ENCODE measurements at regions of chr20 and their contacts with region 1.

Region 1: GRCh38 chr20:64168381-64169090 is 4.3 kb downstream of the MYT1 start:
- DNase-seq: no peak
- H3K4me3 ChIP-seq: no peak overlapping the region
- H3K27ac ChIP-seq: no peak overlapping the region
- H3K4me1 ChIP-seq: no peaks in the 10 kb centered on the region
- H3K27me3 ChIP-seq: peaks cover 97% of the 10 kb centered on the region
- CTCF ChIP-seq: no peak

Region 2: GRCh38 chr20:63156221-63156671 is 1012.3 kb before region 1 on chr20:
- CTCF ChIA-PET with region 1: interaction called, 26 read pairs
- POLR2A ChIA-PET with region 1: no interaction called
- intact Hi-C with region 1: no loop called
- DNase-seq: no peak
- H3K4me3 ChIP-seq: no peak overlapping the region
- H3K27ac ChIP-seq: no peak overlapping the region
- H3K4me1 ChIP-seq: no peaks in the 10 kb centered on the region
- H3K27me3 ChIP-seq: peaks cover 93% of the 10 kb centered on the region
- CTCF ChIP-seq: no peak

Region 3: DNA sequence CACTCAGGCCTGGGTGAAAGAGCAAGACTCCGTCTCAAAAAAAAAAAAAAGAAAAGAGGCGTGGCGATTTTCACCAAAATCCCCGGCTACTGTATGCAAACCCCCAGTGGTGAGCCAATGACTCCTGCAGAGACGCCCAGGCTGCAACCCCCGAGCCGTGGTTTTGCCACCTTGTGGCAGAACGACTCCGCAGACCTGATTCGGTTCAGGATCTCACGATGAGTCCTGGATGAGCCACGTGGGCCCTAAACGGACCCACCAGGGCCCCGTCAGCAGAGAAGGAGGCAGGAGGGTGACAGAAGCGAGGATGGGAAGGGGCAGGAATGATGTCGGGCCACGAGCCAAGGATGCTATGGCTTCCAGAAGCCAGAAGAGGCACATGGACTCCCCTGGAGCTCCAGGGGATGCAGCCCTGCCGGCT is 386.5 kb before region 1 on chr20:
- CTCF ChIA-PET with region 1: no interaction called
- POLR2A ChIA-PET with region 1: no interaction called
- intact Hi-C with region 1: no loop called
- DNase-seq: no peak
- H3K4me3 ChIP-seq: no peak overlapping the region
- H3K27ac ChIP-seq: no peak overlapping the region
- H3K4me1 ChIP-seq: peaks cover 11% of the 10 kb centered on the region
- H3K27me3 ChIP-seq: no peaks in the 10 kb centered on the region
- CTCF ChIP-seq: no peak; the same call in 1 of the 2 replicates

Region 4: DNA sequence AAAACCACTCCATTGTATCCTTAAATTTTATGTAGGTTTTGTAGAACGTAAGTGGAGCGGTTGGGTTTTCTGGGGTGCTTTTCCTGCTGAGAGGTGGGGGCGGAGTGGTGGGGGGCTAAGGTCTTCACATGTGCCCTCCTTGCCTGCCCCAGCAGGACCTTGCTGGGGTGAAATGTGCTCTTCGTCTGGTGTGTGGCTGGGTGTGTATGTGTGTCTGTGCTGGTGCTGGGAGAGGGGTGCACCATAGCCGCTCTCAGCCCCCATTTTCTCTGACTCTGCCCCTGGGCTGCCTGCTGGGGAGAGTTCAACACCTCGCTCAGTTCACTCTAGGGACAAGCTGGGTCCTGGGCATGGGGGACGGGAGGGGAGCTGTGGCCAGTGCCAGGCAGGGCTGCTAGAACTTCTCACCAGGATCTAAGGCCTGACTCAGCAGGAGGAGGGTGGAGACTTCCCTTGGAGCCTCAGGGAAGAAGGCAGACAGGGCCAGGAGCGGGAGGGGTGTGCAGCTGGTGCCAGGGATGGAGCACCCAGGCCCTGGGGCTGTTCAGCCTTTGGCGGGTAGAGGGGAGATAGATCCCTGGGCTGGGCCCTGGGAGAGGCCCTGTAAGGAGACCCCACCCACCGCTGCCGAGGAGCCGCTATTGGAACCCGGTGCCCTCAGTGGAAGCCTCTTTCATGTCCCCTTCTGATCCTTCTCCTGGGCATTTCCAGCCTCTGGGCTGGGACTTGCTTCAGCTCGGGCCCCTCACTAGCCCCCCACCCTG is 123.9 kb before region 1 on chr20:
- CTCF ChIA-PET with region 1: no interaction called
- POLR2A ChIA-PET with region 1: no interaction called
- intact Hi-C with region 1: no loop called
- DNase-seq: peak; percentile 61 to 75
- H3K4me3 ChIP-seq: no peak overlapping the region
- H3K27ac ChIP-seq: no peak overlapping the region
- H3K4me1 ChIP-seq: peaks cover 20% of the 10 kb centered on the region
- H3K27me3 ChIP-seq: peaks cover 21% of the 10 kb centered on the region
- CTCF ChIP-seq: no peak

Region 5: DNA sequence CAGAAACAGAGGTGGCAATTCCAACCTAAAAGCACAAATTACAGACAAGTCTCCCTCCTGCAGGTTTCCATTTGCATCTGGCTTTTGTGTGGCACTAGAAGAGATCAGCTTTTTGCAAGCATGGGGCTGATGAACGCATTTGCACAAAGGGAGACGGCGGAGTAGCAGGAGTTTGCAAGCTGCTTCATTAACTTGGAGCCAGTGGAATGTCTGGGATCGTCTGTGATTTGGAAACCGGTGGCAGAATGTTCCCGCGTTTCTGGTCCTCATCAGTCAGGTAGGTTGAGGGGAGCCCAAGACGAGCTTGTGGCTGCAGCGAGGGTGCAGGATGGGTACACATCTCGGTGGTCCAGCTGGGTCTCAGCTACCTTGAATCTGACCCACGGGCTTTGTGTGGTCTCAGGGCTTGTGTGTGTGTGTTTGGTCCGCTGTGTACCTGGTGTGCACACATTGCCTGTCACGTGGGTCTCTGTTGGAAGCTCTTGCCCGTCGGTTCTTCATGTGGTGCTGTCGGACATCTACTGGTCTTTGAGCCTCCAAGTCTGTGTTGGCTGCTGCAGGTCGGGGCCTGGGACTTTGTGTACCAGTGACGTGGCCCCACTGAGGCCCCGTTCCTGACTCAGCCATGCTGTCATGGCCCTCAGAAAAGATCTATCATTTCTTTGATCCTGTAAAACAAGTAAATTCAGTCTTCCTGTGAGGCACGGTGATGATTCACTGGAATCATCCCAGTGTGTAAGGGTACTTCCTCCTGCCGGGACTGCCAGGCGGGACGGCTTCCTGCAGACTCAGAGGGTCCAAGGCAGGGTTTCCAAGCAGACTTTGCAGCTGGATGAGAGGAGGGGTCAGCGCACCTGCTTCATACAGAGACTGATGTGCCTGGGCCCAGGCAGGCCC is 16.7 kb before region 1 on chr20:
- CTCF ChIA-PET with region 1: no interaction called
- POLR2A ChIA-PET with region 1: no interaction called
- intact Hi-C with region 1: no loop called
- DNase-seq: peak; percentile 48 to 86
- H3K4me3 ChIP-seq: peak overlapping the region; percentile 14; the same call in 1 of the 2 replicates
- H3K27ac ChIP-seq: no peak overlapping the region
- H3K4me1 ChIP-seq: peaks cover 14% of the 10 kb centered on the region; the same call in 1 of the 2 replicates
- H3K27me3 ChIP-seq: peaks cover 23% of the 10 kb centered on the region
- CTCF ChIP-seq: no peak

Region 6: DNA sequence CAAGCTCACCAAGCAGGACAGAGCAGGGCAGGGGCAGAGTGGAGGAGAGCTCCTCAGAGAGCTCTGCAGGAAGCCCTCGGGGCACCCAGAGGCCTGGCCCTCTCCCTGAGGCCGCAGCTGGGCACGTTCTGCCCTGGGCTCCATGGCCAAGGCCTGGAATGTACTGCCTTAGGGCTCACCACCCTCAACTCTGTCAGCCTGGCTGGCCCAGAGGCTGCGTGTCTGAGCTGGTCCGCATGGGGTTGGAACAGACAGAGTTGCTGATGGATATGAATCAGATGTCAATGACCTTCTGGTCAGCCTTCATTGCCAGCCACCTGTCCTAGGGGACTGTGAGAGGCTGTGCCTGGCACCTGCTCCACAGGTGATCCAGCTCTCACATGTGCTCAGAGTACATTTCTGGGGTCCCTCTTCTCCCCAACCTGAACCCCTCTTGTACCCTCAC is 53.8 kb after region 1 on chr20:
- CTCF ChIA-PET with region 1: no interaction called
- POLR2A ChIA-PET with region 1: no interaction called
- intact Hi-C with region 1: no loop called
- DNase-seq: peak; percentile 86 to 92
- H3K4me3 ChIP-seq: no peak overlapping the region
- H3K27ac ChIP-seq: no peak overlapping the region
- H3K4me1 ChIP-seq: peaks cover 11% of the 10 kb centered on the region
- H3K27me3 ChIP-seq: peaks cover 61% of the 10 kb centered on the region
- CTCF ChIP-seq: no peak